Common myeloid progenitor, CD34-positive (primary cell): ENCODE measurements at regions of chr5 and their contacts with region 1.

Region 1: GRCh38 chr5:52948418-52949076 is 40.6 kb upstream of the ITGA2 start:
- DNase-seq: peak; percentile 79 to 85 (median 84)
- H3K4me3 ChIP-seq: no peak overlapping the region
- H3K27ac ChIP-seq: no peak overlapping the region
- H3K4me1 ChIP-seq: peaks cover 0 to 8% (median 0%) of the 10 kb centered on the region in 4 experiments
- H3K27me3 ChIP-seq: no peaks in the 10 kb centered on the region

Region 2: GRCh38 chr5:52938226-52938625 is 10.3 kb before region 1 on chr5:
- CTCF ChIA-PET with region 1: interaction called, 13 read pairs
- POLR2A ChIA-PET with region 1: no interaction called
- DNase-seq: no peak
- H3K4me3 ChIP-seq: no peak overlapping the region
- H3K27ac ChIP-seq: no peak overlapping the region
- H3K4me1 ChIP-seq: peaks cover 0 to 6% (median 2%) of the 10 kb centered on the region in 4 experiments
- H3K27me3 ChIP-seq: no peaks in the 10 kb centered on the region

Region 3: DNA sequence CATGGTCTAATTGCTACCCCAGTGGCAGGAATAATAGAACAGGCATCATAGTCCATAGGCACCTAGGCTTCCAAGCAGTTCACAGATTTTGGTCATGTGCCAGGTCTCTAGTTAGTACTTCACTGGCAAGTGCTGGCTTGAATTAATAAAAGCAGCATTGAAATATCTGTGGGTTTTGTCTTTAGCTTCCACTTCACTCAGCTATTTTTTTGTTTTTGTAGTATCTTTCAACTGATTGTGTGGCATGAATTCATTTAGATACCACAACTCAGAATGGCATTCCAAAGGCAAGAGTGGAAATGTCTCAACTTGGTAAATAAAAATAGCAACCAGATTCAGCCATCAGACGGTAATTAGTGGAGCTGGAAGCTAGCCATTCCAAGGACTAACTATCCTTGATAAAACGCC is 12.7 kb after region 1 on chr5:
- CTCF ChIA-PET with region 1: interaction called, 13 read pairs
- POLR2A ChIA-PET with region 1: interaction called, 3 read pairs
- DNase-seq: no peak
- H3K4me3 ChIP-seq: no peak overlapping the region
- H3K27ac ChIP-seq: no peak overlapping the region
- H3K4me1 ChIP-seq: no peaks in the 10 kb centered on the region
- H3K27me3 ChIP-seq: no peaks in the 10 kb centered on the region

Region 4: GRCh38 chr5:53035868-53036381 is 87.4 kb after region 1 on chr5:
- CTCF ChIA-PET with region 1: interaction called, 10 read pairs
- POLR2A ChIA-PET with region 1: no interaction called
- DNase-seq: peak in 2 of 3 donors; percentile 29 to 42
- H3K4me3 ChIP-seq: no peak overlapping the region
- H3K27ac ChIP-seq: no peak overlapping the region
- H3K4me1 ChIP-seq: peaks cover 0 to 11% (median 4%) of the 10 kb centered on the region in 4 experiments
- H3K27me3 ChIP-seq: no peaks in the 10 kb centered on the region

Region 5: DNA sequence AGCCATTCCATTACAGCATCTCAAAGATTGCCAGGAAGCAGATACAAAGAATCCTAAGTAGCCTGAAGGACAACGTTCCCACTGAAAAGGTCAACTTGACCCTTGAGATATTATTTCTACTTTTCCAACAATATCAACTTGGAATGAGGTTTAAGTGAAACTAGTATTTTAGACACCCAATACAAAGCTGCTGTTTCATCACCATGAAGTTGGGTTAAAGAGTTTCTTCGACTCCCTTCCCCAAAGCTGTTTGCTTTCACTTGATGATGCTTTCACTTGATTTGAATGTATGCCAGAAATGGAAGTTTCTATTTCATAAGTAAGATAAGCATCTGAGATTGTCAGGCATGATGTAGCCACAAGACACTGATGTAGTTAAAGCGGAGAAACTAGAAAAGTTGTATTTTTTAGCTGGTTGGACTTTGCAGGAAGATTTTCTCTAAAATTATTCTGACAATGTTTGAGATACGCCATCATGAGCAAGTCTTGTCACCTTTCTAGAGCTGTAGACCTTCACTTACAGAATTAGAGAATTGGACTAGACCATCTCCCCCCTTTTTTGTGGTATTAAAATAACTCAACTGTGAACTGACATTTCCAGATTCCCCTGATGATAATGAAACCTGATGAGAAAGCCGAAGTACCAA is 140.9 kb after region 1 on chr5:
- CTCF ChIA-PET with region 1: interaction called, 124 read pairs
- POLR2A ChIA-PET with region 1: no interaction called
- DNase-seq: peak; percentile 4 to 40 (median 31)
- H3K4me3 ChIP-seq: no peak overlapping the region
- H3K27ac ChIP-seq: no peak overlapping the region
- H3K4me1 ChIP-seq: no peaks in the 10 kb centered on the region
- H3K27me3 ChIP-seq: no peaks in the 10 kb centered on the region

Region 6: DNA sequence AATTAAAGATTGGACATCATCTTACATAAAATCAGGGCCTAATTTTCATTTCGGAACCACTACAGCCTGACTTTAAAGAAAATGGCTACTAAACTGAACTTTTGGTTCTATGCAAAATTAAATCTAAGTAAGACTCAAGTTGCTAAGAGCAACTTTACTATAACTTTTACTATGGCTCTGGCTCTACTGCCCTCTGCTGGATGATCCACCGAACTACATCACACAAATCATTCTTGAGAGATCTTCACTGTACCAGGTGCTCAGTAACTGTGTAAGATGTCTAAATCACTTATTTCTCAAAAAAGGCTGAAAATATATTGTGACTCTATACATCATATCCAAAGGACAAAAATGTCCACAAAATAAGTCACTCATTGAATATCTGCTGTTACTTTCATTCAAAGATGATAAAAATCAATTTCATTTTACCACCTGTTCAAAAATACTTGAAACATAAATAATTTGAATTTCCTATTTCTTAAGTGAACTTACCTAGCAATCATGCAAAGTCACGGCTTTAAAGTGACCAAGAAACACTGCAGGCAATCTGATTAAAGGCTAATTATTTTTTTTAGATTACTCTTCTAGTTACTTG is 147.5 kb after region 1 on chr5:
- CTCF ChIA-PET with region 1: interaction called, 124 read pairs
- POLR2A ChIA-PET with region 1: no interaction called
- DNase-seq: peak; percentile 62 to 85 (median 78)
- H3K4me3 ChIP-seq: no peak overlapping the region
- H3K27ac ChIP-seq: no peak overlapping the region
- H3K4me1 ChIP-seq: no peaks in the 10 kb centered on the region
- H3K27me3 ChIP-seq: no peaks in the 10 kb centered on the region